CD8-positive, alpha-beta T cell (primary cell): ENCODE measurements at regions of chr13 and their contacts with region 1.

Region 1: GRCh38 chr13:59391696-59392095 is 772.0 kb downstream of the DIAPH3 start:
- DNase-seq: peak in 8 of 9 experiments; percentile 27 to 84 (median 52)
- ATAC-seq: peak; percentile 95
- H3K4me3 ChIP-seq: no peak overlapping the region
- H3K4me3 Mint-ChIP-seq: no peak overlapping the region
- H3K27ac ChIP-seq: peak overlapping the region in 1 of 2 experiments; percentile 17
- H3K27ac Mint-ChIP-seq: no peak overlapping the region
- H3K4me1 ChIP-seq: peaks cover 11% of the 10 kb centered on the region
- H3K4me1 Mint-ChIP-seq: no peaks in the 10 kb centered on the region
- H3K27me3 ChIP-seq: no peaks in the 10 kb centered on the region
- H3K27me3 Mint-ChIP-seq: peaks cover 2% of the 10 kb centered on the region
- CTCF ChIP-seq: peak; percentile 72

Region 2: DNA sequence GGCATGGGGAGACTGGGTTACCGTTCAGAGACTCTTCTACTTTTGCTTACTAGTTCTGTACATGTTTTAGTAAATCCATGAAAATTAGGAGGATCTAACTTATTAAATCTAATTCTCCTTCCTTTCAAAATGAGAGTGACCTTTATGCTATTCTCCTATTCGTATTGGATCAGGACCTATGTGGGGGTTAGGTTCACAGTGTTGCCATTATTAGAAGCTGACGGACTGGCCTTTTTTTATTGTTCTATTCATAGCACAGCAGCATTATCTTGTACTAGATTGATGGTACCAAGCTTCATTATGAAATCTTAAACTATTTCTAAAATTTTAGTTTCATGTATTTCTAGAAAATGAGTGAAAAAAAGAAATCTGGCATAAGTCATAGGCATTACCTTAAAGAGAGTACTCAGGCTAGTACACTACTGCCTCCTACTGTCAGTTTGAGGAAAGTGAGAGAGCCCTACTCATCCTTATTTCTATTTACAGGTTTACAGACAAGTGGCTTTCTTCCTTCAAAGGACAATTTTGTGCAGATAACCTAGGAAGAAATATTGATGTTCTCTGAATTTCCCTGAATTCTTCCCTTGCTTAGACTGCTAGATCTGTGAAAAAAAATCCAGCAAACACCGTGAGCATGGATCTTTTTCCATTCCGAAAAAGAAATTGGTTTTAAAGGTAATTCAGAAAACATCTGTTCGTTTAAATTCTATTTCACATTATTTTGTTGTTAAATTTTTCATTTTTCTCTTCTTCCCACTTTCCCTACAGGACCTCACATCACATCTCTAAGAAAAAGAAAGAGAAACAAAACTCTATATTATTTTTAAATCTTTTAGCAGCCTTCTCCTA is 286.5 kb after region 1 on chr13:
- CTCF ChIA-PET with region 1: interaction called, 23 read pairs
- POLR2A ChIA-PET with region 1: no interaction called
- intact Hi-C with region 1: loop called (anchors 1 to 2 kb)
- DNase-seq: peak in 2 of 9 experiments; percentile 39 to 53
- ATAC-seq: peak; percentile 66
- H3K4me3 ChIP-seq: no peak overlapping the region
- H3K4me3 Mint-ChIP-seq: no peak overlapping the region
- H3K27ac ChIP-seq: no peak overlapping the region
- H3K27ac Mint-ChIP-seq: no peak overlapping the region
- H3K4me1 ChIP-seq: no peaks in the 10 kb centered on the region
- H3K4me1 Mint-ChIP-seq: peaks cover 5% of the 10 kb centered on the region
- H3K27me3 ChIP-seq: no peaks in the 10 kb centered on the region
- H3K27me3 Mint-ChIP-seq: no peaks in the 10 kb centered on the region
- CTCF ChIP-seq: peak; percentile 57

Region 3: GRCh38 chr13:60163478-60164233 is 772.0 kb after region 1 on chr13 and contains the start of gene DIAPH3:
- CTCF ChIA-PET with region 1: no interaction called
- POLR2A ChIA-PET with region 1: interaction called, 4 read pairs
- intact Hi-C with region 1: loop called in 1 of 2 experiments (anchors 1 kb)
- DNase-seq: peak; percentile 84 to 94 (median 92)
- ATAC-seq: peak; percentile 99
- H3K4me3 ChIP-seq: peak within 1 kb of the TSS; percentile 77 to 95
- H3K4me3 Mint-ChIP-seq: peak within 1 kb of the TSS; percentile 95
- H3K27ac ChIP-seq: peak within 1 kb of the TSS; percentile 70 to 89
- H3K27ac Mint-ChIP-seq: peak within 1 kb of the TSS; percentile 95
- H3K4me1 ChIP-seq: peaks cover 16% of the 10 kb centered on the region
- H3K4me1 Mint-ChIP-seq: peaks cover 24% of the 10 kb centered on the region
- H3K27me3 ChIP-seq: no peaks in the 10 kb centered on the region
- H3K27me3 Mint-ChIP-seq: peaks cover 9% of the 10 kb centered on the region
- CTCF ChIP-seq: no peak
- total RNA-seq, gene DIAPH3: 0.06 to 0.11 TPM

Region 4: DNA sequence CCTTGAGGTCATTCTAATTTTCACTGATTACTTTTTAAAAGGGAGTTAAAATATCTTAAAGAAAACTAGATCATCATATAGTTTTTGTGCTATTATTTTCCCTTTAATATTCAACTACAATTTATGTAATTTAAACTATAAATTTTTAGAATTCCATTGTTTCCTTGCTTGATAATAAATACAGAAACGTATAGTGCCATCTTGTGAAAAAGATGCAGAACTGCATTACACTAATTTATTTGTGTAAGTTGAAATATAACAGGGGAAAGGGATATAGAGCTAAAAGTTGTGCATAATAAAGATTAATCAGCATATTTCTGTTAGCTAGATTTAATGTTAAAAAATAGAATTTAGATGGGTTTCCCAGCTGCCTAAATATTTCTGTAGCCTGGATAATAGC is 943.8 kb after region 1 on chr13:
- CTCF ChIA-PET with region 1: no interaction called
- POLR2A ChIA-PET with region 1: no interaction called
- intact Hi-C with region 1: loop called (anchors 1 to 5 kb)
- DNase-seq: peak in 1 of 9 experiments; percentile 5
- ATAC-seq: no peak
- H3K4me3 ChIP-seq: no peak overlapping the region
- H3K4me3 Mint-ChIP-seq: no peak overlapping the region
- H3K27ac ChIP-seq: no peak overlapping the region
- H3K27ac Mint-ChIP-seq: no peak overlapping the region
- H3K4me1 ChIP-seq: no peaks in the 10 kb centered on the region
- H3K4me1 Mint-ChIP-seq: no peaks in the 10 kb centered on the region
- H3K27me3 ChIP-seq: no peaks in the 10 kb centered on the region
- H3K27me3 Mint-ChIP-seq: peaks cover 3% of the 10 kb centered on the region
- CTCF ChIP-seq: peak; percentile 68

Region 5: GRCh38 chr13:60431108-60431700 is 1039.5 kb after region 1 on chr13:
- CTCF ChIA-PET with region 1: interaction called, 6 read pairs
- POLR2A ChIA-PET with region 1: no interaction called
- intact Hi-C with region 1: loop called (anchors 1 kb)
- DNase-seq: peak in 2 of 9 experiments; percentile 67 to 76
- ATAC-seq: peak; percentile 84
- H3K4me3 ChIP-seq: no peak overlapping the region
- H3K4me3 Mint-ChIP-seq: no peak overlapping the region
- H3K27ac ChIP-seq: no peak overlapping the region
- H3K27ac Mint-ChIP-seq: no peak overlapping the region
- H3K4me1 ChIP-seq: peaks cover 5% of the 10 kb centered on the region
- H3K4me1 Mint-ChIP-seq: peaks cover 34% of the 10 kb centered on the region
- H3K27me3 ChIP-seq: no peaks in the 10 kb centered on the region
- H3K27me3 Mint-ChIP-seq: no peaks in the 10 kb centered on the region
- CTCF ChIP-seq: peak; percentile 100